CD4-positive, alpha-beta memory T cell (primary cell): ENCODE measurements at regions of chr3 and their contacts with region 1.

Region 1: GRCh38 chr3:48635222-48636021 is at the start of gene SLC26A6:
- DNase-seq: peak; percentile 86 to 92 (median 89)
- H3K4me3 ChIP-seq: peak within 1 kb of the TSS; percentile 57 to 91
- H3K4me3 Mint-ChIP-seq: peak within 1 kb of the TSS; percentile 86 to 92 (median 89)
- H3K27ac ChIP-seq: peak within 1 kb of the TSS; percentile 60
- H3K27ac Mint-ChIP-seq: peak within 1 kb of the TSS; percentile 58 to 87 (median 74)
- H3K4me1 ChIP-seq: peaks cover 18% of the 10 kb centered on the region
- H3K4me1 Mint-ChIP-seq: peaks cover 3 to 25% (median 15%) of the 10 kb centered on the region in 4 donors
- H3K27me3 ChIP-seq: no peaks in the 10 kb centered on the region
- H3K27me3 Mint-ChIP-seq: peaks cover 0 to under 1% of the 10 kb centered on the region in 2 donors
- total RNA-seq, gene SLC26A6: 31.6 to 32.4 TPM

Region 2: GRCh38 chr3:48609088-48610005 is 26.1 kb before region 1 on chr3 and contains the start of gene UQCRC1:
- CTCF ChIA-PET with region 1: interaction called, 5 read pairs
- POLR2A ChIA-PET with region 1: interaction called, 12 read pairs
- intact Hi-C with region 1: loop called (anchors 2 kb)
- DNase-seq: peak; percentile 87 to 94 (median 93)
- H3K4me3 ChIP-seq: peak within 1 kb of the TSS; percentile 76 to 83
- H3K4me3 Mint-ChIP-seq: peak within 1 kb of the TSS; percentile 93 to 100 (median 98)
- H3K27ac ChIP-seq: peak within 1 kb of the TSS; percentile 89
- H3K27ac Mint-ChIP-seq: peak within 1 kb of the TSS; percentile 95 to 100 (median 98)
- H3K4me1 ChIP-seq: peaks cover 10% of the 10 kb centered on the region
- H3K4me1 Mint-ChIP-seq: peaks cover 12 to 24% (median 19%) of the 10 kb centered on the region in 4 donors
- H3K27me3 ChIP-seq: no peaks in the 10 kb centered on the region
- H3K27me3 Mint-ChIP-seq: no peaks in the 10 kb centered on the region
- total RNA-seq, gene UQCRC1: 73.7 to 91.3 TPM

Region 3: DNA sequence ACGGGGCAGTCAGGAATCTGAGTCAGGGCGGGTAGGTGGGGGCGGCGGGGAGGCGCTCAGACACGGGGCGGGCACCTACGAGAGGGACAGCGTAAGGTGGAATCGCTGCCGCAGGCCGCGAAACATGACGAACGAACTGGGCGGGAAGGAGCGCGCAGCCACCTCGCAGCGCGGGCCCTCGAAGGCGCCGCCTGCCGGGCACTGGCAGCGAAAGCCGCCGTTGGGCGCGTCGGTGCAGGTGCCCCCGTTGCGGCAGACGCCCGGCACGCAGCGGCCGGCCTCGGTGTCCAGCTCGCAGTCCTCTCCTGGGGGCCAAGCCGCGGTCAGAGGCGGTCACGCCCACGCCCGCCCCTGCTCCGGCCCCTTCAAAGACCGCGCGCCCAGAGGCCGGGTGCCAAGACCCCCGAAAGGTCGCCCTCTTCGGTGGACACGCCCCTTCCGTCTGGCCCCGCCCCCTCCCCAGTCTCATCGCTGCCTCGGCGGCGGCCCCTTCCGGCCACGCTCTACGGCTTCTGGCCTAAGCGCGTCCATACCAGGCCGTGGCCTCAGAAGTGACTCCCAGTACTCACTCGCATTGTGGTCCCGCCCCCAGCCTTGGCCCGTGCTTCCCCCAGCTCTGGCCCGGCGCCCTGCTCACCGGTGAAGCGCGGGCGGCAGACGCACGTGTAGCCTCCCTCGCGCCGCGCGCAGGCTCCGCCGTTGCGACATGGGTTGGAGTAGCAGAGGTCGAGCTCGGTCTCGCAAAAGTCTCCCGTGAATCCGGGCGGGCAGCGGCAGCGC is 20.8 kb after region 1 on chr3:
- CTCF ChIA-PET with region 1: interaction called, 6 read pairs
- POLR2A ChIA-PET with region 1: interaction called, 14 read pairs
- intact Hi-C with region 1: loop called (anchors 1 kb)
- DNase-seq: peak; percentile 86 to 91 (median 88)
- H3K4me3 ChIP-seq: peak overlapping the region; percentile 29 to 59
- H3K4me3 Mint-ChIP-seq: peak overlapping the region; percentile 80 to 88 (median 84)
- H3K27ac ChIP-seq: peak overlapping the region; percentile 38
- H3K27ac Mint-ChIP-seq: peak overlapping the region; percentile 82 to 93 (median 88)
- H3K4me1 ChIP-seq: peaks cover 19% of the 10 kb centered on the region
- H3K4me1 Mint-ChIP-seq: peaks cover 5 to 31% (median 10%) of the 10 kb centered on the region in 4 donors
- H3K27me3 ChIP-seq: no peaks in the 10 kb centered on the region
- H3K27me3 Mint-ChIP-seq: peaks cover 0 to 3% of the 10 kb centered on the region in 2 donors

Region 4: DNA sequence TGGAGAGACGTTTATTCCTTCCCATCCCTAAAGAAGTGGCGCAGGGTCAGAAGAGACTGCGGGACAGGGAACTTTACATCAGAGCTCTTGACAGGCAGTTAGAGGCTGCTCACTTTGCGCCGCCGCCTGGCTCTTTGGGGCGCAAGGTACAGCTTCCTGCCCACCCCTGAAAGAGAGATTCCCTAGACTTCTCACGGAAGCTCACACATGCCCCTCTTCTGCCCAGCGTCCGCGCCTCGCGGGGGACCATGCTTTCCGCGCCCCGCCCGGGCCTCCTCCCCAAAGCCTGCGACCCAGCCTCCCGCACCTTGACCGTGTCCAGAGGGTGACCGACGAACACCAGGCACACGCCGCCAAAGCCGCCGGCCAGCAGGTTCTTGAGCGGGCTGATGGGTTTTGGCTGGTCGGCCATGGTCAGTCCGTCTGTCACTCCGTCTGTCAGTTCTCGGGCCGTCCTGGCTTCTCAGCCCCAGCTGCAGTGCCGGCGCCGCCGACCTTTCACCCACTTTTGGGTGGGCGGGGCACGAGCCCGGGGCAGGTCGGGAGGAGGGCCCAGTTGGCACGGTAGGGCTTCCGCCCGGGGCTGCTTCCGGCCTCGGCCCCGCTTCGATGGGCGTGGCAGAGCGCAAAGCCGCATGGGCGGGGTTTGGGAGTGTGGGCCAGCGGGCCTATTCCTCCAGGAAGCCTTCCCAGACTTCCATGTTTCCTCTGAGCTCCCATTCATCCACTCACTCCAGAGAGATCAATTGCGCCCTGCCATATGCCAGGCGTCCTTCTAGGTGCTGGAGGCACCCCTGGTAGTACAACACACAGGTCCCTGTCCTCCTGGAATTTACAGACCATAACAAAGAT is 263.2 kb after region 1 on chr3 and contains the start of gene SLC25A20:
- CTCF ChIA-PET with region 1: no interaction called
- POLR2A ChIA-PET with region 1: no interaction called
- intact Hi-C with region 1: no loop called
- DNase-seq: peak; percentile 85 to 89 (median 86)
- H3K4me3 ChIP-seq: peak within 1 kb of the TSS; percentile 76 to 98
- H3K4me3 Mint-ChIP-seq: peak within 1 kb of the TSS; percentile 91 to 97 (median 96)
- H3K27ac ChIP-seq: peak within 1 kb of the TSS; percentile 76
- H3K27ac Mint-ChIP-seq: peak within 1 kb of the TSS; percentile 71 to 97 (median 96)
- H3K4me1 ChIP-seq: peaks cover 39% of the 10 kb centered on the region
- H3K4me1 Mint-ChIP-seq: peaks cover 23 to 61% (median 39%) of the 10 kb centered on the region in 4 donors
- H3K27me3 ChIP-seq: no peaks in the 10 kb centered on the region
- H3K27me3 Mint-ChIP-seq: no peaks in the 10 kb centered on the region
- total RNA-seq, gene SLC25A20: 12.7 to 19.2 TPM